RWPE1 (cell line): ENCODE measurements at regions of chr18 and their contacts with region 1.

Region 1: DNA sequence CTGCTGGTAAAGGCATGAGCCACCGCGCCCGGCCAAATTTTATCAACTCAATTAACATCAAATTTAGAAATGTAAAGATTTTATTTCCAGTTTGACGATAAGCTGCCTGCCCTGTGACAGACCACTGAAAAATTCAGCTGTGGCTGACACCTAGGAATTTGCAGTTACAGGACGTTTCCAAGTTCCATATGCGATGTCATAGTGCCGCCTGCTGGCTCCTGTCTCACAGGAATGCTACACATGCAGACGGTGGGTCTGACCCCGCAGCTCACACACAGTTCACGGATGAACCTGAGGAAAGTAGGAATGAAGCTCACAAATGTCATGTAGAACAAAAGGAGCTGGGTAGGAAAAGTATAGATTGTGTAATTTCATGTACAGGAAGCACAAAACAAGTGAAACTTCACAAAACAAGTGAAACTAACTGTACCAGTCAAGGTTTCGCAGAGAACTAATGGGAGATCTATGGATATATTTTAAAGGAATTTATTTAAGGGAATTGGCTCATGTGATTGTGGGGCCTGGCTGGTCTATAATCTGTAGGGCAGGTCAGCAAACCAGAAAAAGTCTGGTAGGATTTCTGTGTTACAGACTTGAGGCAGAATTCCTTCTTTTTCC is 13.2 kb upstream of the SEH1L start:
- DNase-seq: peak; percentile 72
- H3K27ac ChIP-seq: no peak overlapping the region
- CTCF ChIP-seq: peak; percentile 93

Region 2: GRCh38 chr18:12639990-12640880 is 294.3 kb before region 1 on chr18:
- CTCF ChIA-PET with region 1: no interaction called
- POLR2A ChIA-PET with region 1: no interaction called
- DNase-seq: no peak
- H3K27ac ChIP-seq: peak overlapping the region; percentile 84
- CTCF ChIP-seq: no peak

Region 3: GRCh38 chr18:12726774-12727550 is 207.6 kb before region 1 on chr18:
- CTCF ChIA-PET with region 1: interaction called, 13 read pairs
- POLR2A ChIA-PET with region 1: no interaction called
- DNase-seq: peak; percentile 68
- H3K27ac ChIP-seq: peak overlapping the region; percentile 25; the same call in 1 of the 2 replicates
- CTCF ChIP-seq: peak; percentile 85

Region 4: GRCh38 chr18:12766986-12767433 is 167.6 kb before region 1 on chr18:
- CTCF ChIA-PET with region 1: interaction called, 17 read pairs
- POLR2A ChIA-PET with region 1: no interaction called
- DNase-seq: no peak
- H3K27ac ChIP-seq: no peak overlapping the region
- CTCF ChIP-seq: no peak

Region 5: GRCh38 chr18:12872408-12872807 is 62.2 kb before region 1 on chr18:
- CTCF ChIA-PET with region 1: no interaction called
- POLR2A ChIA-PET with region 1: no interaction called
- DNase-seq: no peak
- H3K27ac ChIP-seq: no peak overlapping the region
- CTCF ChIP-seq: no peak